Activated CD8-positive, alpha-beta T cell treated with anti-CD3 and anti-CD28 coated beads for 36 hours (primary cell): ENCODE measurements at regions of chr11 and their contacts with region 1.

Region 1: DNA sequence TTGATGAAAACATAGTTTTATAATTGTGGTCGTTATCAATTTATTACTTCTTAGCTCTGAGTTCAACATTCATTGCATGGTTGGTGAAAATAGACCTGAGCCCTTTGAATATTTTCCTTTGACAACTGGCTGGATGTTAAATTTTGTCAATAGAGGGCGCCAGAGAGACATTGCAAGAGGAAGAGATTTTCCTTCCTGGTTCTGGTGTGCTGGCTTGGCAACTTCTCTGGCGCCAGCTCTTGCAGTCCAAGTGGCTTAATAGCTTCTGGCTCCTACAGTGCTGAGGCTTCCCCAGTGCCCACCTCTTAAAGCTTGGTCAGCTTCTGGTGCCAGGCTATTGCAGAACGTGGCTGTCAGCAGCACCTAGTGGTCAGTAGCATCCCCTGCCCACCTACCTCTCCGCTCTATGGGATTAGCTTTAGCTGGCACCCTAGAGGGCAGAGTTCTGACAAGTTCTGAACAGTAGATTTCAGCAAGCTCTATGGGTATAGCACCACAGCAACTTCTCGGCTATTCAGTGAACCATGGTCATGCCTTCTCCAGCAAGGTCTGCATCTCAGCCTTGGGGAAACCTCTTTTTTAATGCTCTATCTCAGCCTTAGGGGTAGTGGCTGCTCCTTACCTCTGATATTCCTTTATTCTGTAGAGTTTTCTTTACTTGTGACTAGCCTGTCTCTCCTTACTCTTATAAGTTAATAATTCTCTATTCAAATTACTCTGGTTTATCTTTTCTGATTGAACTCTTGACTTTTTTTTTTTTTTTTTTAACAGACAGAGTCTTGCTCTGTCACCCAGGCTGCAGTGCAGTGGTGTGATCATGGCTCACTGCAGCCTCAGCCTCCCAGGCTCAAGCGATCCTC is 59.4 kb downstream of the ACER3 start:
- DNase-seq: peak; percentile 69
- ATAC-seq: peak; percentile 82
- H3K4me3 Mint-ChIP-seq: peak overlapping the region; percentile 38
- H3K27ac Mint-ChIP-seq: no peak overlapping the region
- H3K4me1 Mint-ChIP-seq: peaks cover 6% of the 10 kb centered on the region
- H3K27me3 Mint-ChIP-seq: no peaks in the 10 kb centered on the region
- CTCF ChIP-seq: peak; percentile 73

Region 2: GRCh38 chr11:76734456-76735420 is 185.4 kb before region 1 on chr11:
- CTCF ChIA-PET with region 1: interaction called, 42 read pairs
- POLR2A ChIA-PET with region 1: interaction called, 3 read pairs
- intact Hi-C with region 1: loop called (anchors 10 kb)
- DNase-seq: no peak
- ATAC-seq: no peak
- H3K4me3 Mint-ChIP-seq: no peak overlapping the region
- H3K27ac Mint-ChIP-seq: no peak overlapping the region
- H3K4me1 Mint-ChIP-seq: no peaks in the 10 kb centered on the region
- H3K27me3 Mint-ChIP-seq: no peaks in the 10 kb centered on the region
- CTCF ChIP-seq: no peak

Region 3: GRCh38 chr11:76860539-76861475 is 59.3 kb before region 1 on chr11 and contains the start of gene ACER3:
- CTCF ChIA-PET with region 1: interaction called, 32 read pairs
- POLR2A ChIA-PET with region 1: interaction called, 3 read pairs
- intact Hi-C with region 1: no loop called
- DNase-seq: peak; percentile 92
- ATAC-seq: peak; percentile 100
- H3K4me3 Mint-ChIP-seq: peak within 1 kb of the TSS; percentile 88
- H3K27ac Mint-ChIP-seq: peak within 1 kb of the TSS; percentile 76
- H3K4me1 Mint-ChIP-seq: peaks cover 18% of the 10 kb centered on the region
- H3K27me3 Mint-ChIP-seq: no peaks in the 10 kb centered on the region
- CTCF ChIP-seq: no peak
- total RNA-seq, gene ACER3: 10.0 to 10.2 TPM

Region 4: DNA sequence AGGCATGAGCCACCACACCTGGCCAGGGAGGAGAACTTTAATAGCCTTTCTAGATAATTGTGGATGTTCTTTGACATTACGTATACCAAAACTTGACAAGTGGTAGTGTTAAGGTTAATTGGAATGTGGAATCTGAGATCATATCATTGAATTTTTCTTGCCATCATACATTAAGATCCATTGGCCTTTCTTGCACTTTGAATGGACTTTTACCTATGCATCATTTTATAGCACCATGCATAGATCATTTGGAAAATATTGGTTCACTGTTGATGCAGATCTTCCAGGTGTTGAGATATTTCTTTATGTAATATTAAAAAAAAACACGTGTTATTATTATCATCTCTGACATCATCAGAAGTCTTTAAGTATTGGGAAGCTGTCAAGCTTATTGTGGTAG is 22.9 kb before region 1 on chr11:
- CTCF ChIA-PET with region 1: interaction called, 82 read pairs
- POLR2A ChIA-PET with region 1: no interaction called
- intact Hi-C with region 1: no loop called
- DNase-seq: no peak
- ATAC-seq: no peak
- H3K4me3 Mint-ChIP-seq: no peak overlapping the region
- H3K27ac Mint-ChIP-seq: no peak overlapping the region
- H3K4me1 Mint-ChIP-seq: peaks cover 2% of the 10 kb centered on the region
- H3K27me3 Mint-ChIP-seq: no peaks in the 10 kb centered on the region
- CTCF ChIP-seq: no peak

Region 5: DNA sequence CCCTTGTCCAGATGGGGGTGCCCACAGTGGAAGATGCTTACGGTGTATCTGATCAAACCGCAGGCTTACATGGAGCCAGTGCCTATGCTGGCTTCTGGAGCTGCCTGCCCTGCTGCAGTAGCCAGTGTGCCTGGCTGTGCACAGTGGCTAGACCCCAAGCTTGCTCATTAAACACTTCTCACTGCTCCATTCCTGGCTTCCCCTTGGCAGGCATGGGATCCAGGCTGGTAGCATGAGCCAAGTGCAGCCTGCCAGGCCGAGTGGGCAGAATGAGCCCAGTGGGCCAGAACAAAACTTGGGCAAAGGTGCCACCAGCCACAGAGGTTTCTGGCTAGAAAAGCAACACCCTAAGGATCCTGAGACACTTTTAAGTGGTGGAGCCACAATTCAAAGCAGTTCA is 58.7 kb after region 1 on chr11:
- CTCF ChIA-PET with region 1: interaction called, 20 read pairs
- POLR2A ChIA-PET with region 1: no interaction called
- intact Hi-C with region 1: no loop called
- DNase-seq: no peak
- ATAC-seq: no peak
- H3K4me3 Mint-ChIP-seq: no peak overlapping the region
- H3K27ac Mint-ChIP-seq: no peak overlapping the region
- H3K4me1 Mint-ChIP-seq: no peaks in the 10 kb centered on the region
- H3K27me3 Mint-ChIP-seq: no peaks in the 10 kb centered on the region
- CTCF ChIP-seq: no peak

Region 6: DNA sequence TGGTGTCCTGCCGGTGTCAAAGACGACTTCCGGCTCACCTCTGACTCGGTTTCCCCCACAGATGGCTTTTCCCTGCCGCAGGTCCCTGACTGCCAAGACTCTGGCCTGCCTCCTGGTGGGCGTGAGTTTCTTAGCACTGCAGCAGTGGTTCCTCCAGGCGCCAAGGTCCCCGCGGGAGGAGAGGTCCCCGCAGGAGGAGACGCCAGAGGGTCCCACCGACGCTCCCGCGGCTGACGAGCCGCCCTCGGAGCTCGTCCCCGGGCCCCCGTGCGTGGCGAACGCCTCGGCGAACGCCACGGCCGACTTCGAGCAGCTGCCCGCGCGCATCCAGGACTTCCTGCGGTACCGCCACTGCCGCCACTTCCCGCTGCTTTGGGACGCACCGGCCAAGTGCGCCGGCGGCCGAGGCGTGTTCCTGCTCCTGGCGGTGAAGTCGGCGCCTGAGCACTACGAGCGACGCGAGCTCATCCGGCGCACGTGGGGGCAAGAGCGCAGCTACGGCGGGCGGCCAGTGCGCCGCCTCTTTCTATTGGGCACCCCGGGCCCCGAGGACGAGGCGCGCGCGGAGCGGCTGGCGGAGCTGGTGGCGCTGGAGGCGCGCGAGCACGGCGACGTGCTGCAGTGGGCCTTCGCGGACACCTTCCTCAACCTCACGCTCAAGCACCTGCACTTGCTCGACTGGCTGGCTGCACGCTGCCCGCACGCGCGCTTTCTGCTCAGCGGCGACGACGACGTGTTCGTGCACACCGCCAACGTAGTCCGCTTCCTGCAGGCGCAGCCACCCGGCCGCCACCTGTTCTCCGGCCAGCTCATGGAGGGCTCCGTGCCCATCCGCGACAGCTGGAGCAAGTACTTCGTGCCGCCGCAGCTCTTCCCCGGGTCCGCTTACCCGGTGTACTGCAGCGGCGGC is 119.6 kb after region 1 on chr11:
- CTCF ChIA-PET with region 1: interaction called, 29 read pairs
- POLR2A ChIA-PET with region 1: no interaction called
- intact Hi-C with region 1: no loop called
- DNase-seq: peak; percentile 46
- ATAC-seq: peak; percentile 80
- H3K4me3 Mint-ChIP-seq: no peak overlapping the region
- H3K27ac Mint-ChIP-seq: no peak overlapping the region
- H3K4me1 Mint-ChIP-seq: peaks cover 8% of the 10 kb centered on the region
- H3K27me3 Mint-ChIP-seq: peaks cover 46% of the 10 kb centered on the region
- CTCF ChIP-seq: peak; percentile 50

Region 7: DNA sequence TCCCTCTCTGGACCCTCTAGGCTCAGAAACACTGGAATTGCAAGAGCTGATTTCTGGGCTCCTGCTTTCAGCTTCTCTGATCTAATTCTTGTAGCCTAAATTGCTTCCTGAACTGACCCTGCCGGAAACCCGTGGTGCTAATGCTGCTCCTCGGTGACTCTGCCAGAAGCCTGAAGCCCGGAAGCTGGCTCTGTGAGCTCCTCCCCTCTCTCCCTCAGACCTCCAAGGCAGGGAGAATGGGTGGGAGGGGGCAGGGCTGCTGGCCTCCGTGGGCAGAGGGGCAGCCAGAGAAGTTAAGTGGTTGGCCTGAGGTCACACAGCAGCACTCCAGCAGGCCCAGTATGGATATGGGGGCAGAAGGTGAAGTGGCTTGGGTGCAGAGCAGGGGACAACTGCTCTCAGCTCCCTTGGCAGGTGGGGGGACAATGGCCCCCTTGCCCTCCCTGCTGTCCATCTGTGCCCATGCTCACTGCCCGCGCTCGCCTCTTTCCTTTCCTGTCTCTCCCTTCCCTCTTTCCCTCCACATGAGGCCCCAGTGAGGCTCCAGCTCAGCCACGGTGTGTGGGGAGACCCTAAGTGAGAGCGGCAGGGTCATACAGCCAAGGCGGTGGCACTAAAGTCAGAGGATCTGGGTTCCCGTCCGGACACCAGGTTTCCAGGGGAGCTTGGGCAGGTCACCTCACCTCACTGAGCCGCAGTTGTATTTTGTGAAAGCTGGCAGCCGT is 162.9 kb after region 1 on chr11:
- CTCF ChIA-PET with region 1: interaction called, 17 read pairs
- POLR2A ChIA-PET with region 1: no interaction called
- intact Hi-C with region 1: no loop called
- DNase-seq: peak; percentile 77
- ATAC-seq: peak; percentile 97
- H3K4me3 Mint-ChIP-seq: peak overlapping the region; percentile 77
- H3K27ac Mint-ChIP-seq: peak overlapping the region; percentile 94
- H3K4me1 Mint-ChIP-seq: peaks cover 19% of the 10 kb centered on the region
- H3K27me3 Mint-ChIP-seq: no peaks in the 10 kb centered on the region
- CTCF ChIP-seq: no peak